ENCODE measurements at regions of chr6 and their contacts with region 1.

Region 1: DNA sequence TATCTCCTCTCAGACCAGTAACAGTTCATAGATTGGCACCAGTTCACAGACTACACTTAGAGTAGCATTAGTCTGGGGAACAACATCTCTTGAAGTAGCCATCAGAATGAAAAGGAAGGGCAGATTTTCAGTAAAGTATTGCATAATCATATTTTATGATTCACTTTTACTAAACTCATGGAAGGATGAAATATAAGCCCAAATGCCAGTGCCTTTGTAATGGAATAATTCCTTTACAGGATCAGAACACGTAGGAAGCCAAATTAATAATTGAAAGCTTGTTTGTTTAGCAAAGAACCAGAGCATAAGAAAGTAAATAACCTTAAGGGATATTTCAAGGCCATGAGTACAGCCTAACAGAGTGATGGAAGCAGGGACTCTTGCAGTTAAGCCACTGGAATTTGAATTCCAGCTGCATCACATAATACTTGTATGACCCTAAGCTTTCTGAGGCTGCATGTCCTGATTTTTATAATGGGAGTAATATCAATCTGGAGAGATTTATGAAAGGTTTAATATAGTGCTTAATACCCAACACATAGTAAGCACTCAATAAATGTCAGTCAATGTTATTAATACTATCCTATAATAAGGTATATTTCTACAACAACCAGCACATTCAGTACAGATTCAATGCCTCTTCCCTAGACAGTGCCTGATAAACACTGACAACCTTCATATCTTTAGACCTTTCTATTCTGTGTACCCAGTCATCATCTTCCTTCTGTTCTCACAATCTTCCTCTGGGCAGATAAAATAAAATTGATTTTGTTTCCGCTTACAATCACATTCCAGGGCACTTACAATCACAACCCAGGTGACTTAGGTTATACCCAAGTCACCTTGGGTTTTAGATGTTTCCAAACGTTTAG is 11.2 kb upstream of the LOC128125822 start:
- DNase-seq: no peak
- H3K4me3 ChIP-seq: no peak overlapping the region
- H3K27ac ChIP-seq: no peak overlapping the region
- H3K4me1 ChIP-seq: no peaks in the 10 kb centered on the region
- H3K27me3 ChIP-seq: no peaks in the 10 kb centered on the region
- CTCF ChIP-seq: no peak

Region 2: GRCh38 chr6:63504777-63505384 is 56.2 kb before region 1 on chr6:
- intact Hi-C with region 1: loop called (anchors 10 kb)
- DNase-seq: no peak
- H3K4me3 ChIP-seq: no peak overlapping the region
- H3K27ac ChIP-seq: no peak overlapping the region
- H3K4me1 ChIP-seq: no peaks in the 10 kb centered on the region
- H3K27me3 ChIP-seq: no peaks in the 10 kb centered on the region
- CTCF ChIP-seq: no peak